Mucosa of descending colon (tissue), 3 donors: ENCODE measurements at regions of chr6 and their contacts with region 1.

Region 1: GRCh38 chr6:106223300-106223930 is 102.1 kb downstream of the ATG5 start:
- DNase-seq: peak in 2 of 3 donors; percentile 34 to 93
- ATAC-seq: peak; percentile 57
- H3K4me3 ChIP-seq: no peak overlapping the region
- H3K4me1 ChIP-seq: peaks cover 5% of the 10 kb centered on the region
- CTCF ChIP-seq: peak; percentile 16

Region 2: DNA sequence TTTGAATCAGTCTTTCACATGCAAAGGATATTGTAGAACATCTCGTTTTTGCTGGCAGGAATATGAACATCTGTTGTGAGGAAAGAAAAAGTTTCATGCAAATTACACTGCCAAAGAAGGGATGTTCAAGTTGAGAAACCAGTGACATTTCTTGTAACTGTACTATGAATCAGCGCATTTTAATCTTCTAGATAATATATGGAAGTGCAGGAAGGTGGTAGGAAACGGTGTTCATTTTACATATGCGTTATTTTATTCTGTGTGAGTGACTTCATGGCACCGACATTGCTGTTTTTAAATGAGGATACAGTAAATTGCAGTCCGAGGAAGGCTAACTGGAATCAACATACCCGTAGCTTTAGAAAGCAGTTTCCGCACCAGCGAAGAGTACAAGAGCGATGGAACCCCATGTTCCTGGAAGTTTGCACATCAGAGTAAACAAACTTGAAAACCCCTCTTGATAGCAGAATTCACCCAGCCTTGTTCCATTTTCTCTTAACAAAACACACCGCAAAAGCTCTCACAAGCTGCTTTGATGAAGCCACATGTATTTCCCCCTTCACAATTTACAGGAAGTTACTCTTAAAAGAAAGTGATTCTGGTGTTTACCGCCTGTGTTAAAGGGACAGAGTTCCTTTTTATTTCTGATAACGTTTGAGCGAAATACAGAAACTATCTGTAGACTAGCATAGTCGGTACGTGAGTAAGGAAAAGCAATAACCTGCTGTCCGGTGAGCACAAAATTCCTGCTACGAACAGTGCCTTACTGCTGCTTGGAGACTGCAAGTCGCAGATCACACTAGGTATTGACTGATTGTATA is 125.8 kb before region 1 on chr6:
- intact Hi-C with region 1: loop called in 1 of 2 experiments (anchors 10 kb)
- DNase-seq: peak in 1 of 3 donors; percentile 65
- ATAC-seq: peak; percentile 64
- H3K4me3 ChIP-seq: peak overlapping the region; percentile 24
- H3K4me1 ChIP-seq: peaks cover 15% of the 10 kb centered on the region
- CTCF ChIP-seq: no peak

Region 3: DNA sequence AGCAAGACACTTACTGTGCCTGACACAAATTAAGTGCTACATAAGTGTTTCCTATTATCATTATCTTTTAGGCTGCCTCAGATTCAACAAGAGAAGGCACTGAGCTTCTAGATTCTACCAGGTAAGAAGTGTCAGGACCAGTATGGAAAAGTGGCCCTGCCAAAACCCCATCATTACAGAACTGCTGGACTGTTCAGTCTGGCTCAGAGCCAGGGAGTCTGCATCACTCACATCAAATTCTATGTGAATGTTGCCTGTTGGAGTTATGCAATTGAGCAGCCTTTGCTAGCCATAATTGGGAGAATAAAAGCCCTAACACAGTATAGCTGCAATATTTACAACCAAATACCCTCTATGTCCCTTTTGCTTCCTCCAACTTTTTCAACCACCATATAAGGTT is 31.2 kb after region 1 on chr6:
- intact Hi-C with region 1: no loop called
- DNase-seq: no peak
- ATAC-seq: no peak
- H3K4me3 ChIP-seq: no peak overlapping the region
- H3K4me1 ChIP-seq: no peaks in the 10 kb centered on the region
- CTCF ChIP-seq: no peak